Activated CD4-positive, alpha-beta T cell treated with anti-CD3 and anti-CD28 coated beads for 36 hours (primary cell): ENCODE measurements at regions of chr2 and their contacts with region 1.

Region 1: DNA sequence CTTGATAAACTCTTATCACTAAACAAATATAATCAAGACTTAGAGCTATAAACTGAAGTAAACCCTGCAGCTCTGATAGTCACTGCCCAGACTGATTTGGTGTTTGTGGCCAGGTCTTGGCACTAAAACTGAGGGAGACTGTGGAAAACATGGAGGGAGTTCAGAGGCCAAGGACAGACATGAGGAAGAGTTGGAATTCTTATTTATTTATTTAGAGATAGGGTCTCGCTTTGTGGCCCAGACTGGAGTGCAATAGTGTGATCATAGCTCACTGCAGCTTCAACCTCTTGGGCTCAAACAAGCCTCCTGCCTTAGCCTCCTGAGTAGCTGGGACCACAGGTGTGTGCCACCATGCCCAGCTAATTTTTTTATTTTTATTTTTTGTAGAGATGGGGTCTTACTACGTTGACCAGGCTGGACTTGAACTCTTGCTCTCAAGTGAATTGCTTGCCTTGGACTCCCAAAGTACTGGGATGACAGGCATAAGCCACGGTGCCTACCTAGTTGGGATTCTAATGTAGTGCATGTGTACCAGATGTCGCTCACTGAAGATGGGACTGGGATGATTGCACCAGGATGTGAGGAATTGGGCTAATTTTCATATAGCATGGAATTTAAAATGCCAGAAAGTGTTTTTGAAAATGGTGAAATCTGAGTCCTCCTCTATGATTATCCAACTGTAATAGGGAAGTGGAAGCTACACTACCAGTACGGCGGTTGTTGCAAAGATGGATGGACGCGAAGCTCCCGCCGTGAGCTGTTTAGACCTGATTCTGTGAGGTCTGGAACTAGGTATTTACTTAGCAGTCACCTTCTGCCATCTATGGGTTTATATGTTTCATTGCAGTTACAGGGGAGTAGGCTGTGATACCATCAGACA is 52.7 kb upstream of the CTLA4 start:
- DNase-seq: peak; percentile 76
- ATAC-seq: peak; percentile 70
- H3K4me3 Mint-ChIP-seq: peak overlapping the region; percentile 54
- H3K27ac Mint-ChIP-seq: peak overlapping the region; percentile 80
- H3K4me1 Mint-ChIP-seq: peaks cover 63% of the 10 kb centered on the region
- H3K27me3 Mint-ChIP-seq: no peaks in the 10 kb centered on the region

Region 2: DNA sequence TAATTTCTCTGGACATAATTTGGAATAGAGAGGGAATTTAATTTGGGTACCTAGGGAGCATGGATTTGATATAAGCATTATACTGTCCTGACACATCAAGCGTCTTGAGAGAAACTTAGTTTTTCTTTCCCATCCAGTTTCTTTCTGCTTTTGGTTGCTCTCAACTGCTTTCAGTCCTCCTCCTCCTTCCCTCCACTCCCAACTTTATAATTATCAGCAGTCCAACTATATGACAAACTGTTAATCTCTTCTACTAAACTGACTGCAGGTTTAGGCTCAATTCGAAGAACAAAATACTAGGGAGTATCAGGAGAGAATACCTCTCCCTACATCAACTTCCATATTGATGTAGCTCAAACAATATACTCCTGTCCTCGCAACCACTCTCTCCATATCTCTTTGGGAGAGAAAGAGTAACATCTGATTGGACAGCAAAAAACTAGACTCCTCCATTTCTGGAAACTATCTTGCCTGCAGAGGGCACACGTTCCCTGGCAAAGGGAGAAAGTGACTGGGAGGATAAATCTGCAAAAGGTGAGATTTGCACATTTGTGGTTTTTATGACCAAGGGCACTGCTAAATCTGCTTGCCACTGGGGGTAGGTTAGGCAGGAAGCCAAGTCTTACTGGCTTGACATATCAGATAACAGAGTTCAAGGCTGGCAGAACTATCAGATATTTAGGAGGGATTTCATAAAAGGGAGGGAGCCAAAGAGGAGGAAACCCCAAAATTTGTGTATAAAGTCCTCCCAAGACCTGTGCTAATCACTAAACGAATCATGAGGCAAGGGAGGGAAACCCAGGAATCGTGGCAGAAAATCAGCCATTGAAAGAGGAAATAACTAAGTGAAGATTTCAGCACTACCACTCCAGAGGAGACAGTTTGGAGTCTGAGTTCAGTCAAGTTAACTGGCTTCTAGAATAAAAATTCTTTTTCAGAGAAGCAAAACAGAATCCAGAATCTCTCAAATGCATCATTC is 983.4 kb before region 1 on chr2:
- CTCF ChIA-PET with region 1: no interaction called
- POLR2A ChIA-PET with region 1: no interaction called
- intact Hi-C with region 1: loop called in 1 of 2 experiments (anchors 2 kb)
- DNase-seq: peak; percentile 73
- ATAC-seq: peak; percentile 97
- H3K4me3 Mint-ChIP-seq: no peak overlapping the region
- H3K27ac Mint-ChIP-seq: no peak overlapping the region
- H3K4me1 Mint-ChIP-seq: peaks cover 10% of the 10 kb centered on the region
- H3K27me3 Mint-ChIP-seq: no peaks in the 10 kb centered on the region

Region 3: GRCh38 chr2:203453858-203454451 is 360.9 kb before region 1 on chr2:
- CTCF ChIA-PET with region 1: interaction called, 5 read pairs
- POLR2A ChIA-PET with region 1: no interaction called
- intact Hi-C with region 1: loop called in 1 of 2 experiments (anchors 1 kb)
- DNase-seq: peak; percentile 44
- ATAC-seq: no peak
- H3K4me3 Mint-ChIP-seq: no peak overlapping the region
- H3K27ac Mint-ChIP-seq: no peak overlapping the region
- H3K4me1 Mint-ChIP-seq: no peaks in the 10 kb centered on the region
- H3K27me3 Mint-ChIP-seq: no peaks in the 10 kb centered on the region

Region 4: DNA sequence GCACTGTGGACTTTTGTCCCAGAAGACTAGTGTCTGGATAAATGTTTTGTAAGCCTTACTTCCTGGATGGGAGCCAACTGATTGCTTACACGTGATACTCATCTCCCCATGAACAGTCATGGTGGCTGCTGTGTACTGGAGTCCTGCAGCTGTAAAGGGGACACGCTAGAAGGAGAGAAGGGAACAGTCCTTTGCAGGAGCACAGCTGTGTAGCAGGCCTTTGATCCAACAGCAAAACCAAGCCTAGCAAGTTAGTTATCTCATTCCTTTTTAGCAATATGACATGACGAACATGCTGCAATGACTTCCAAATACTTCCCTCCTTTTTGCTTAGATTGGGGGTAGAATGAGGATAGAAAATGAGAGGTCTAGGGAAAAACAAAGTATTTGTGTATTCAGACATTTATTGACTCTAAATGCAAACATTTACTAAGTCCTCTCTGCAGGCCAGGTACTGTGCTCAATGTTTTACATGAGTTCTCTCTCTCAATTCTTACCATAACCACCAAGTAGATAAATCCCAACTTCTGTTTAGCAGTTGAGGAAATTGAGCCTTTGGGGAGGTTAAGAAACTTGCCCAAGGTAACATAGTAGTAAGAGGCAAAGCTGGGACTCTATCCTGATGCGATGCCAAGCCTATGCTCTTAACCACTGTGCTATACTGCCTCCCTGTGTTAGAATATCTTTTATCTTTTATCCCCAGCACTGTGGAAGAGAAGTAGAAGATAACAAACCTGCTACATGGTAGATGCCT is 163.9 kb before region 1 on chr2:
- CTCF ChIA-PET with region 1: interaction called, 4 read pairs
- POLR2A ChIA-PET with region 1: no interaction called
- intact Hi-C with region 1: loop called in 1 of 2 experiments (anchors 2 kb)
- DNase-seq: peak; percentile 20
- ATAC-seq: peak; percentile 90
- H3K4me3 Mint-ChIP-seq: no peak overlapping the region
- H3K27ac Mint-ChIP-seq: no peak overlapping the region
- H3K4me1 Mint-ChIP-seq: peaks cover 20% of the 10 kb centered on the region
- H3K27me3 Mint-ChIP-seq: no peaks in the 10 kb centered on the region

Region 5: DNA sequence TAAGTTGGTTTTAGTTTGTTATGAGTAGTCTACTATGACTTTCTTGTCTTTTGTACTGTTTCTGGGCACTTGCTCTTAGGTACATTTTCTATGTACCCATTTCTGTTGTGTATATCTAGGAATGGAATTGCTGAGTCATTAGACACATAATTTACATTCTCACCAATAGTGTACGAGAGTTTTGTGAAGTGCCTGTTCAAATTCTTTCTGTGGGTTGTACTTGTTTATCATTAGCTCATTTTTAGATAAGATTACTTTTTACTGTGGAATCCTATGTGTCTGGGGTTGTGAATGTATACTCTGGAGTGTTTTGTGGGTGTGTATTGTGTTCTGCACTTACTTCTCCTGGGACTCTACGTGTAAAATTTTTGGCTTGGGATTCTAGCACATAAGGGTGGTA is 145.1 kb before region 1 on chr2:
- CTCF ChIA-PET with region 1: no interaction called
- POLR2A ChIA-PET with region 1: no interaction called
- intact Hi-C with region 1: no loop called
- DNase-seq: no peak
- ATAC-seq: peak; percentile 7
- H3K4me3 Mint-ChIP-seq: no peak overlapping the region
- H3K27ac Mint-ChIP-seq: peak overlapping the region; percentile 47
- H3K4me1 Mint-ChIP-seq: peaks cover 20% of the 10 kb centered on the region
- H3K27me3 Mint-ChIP-seq: no peaks in the 10 kb centered on the region

Region 6: GRCh38 chr2:203740780-203741281 is 74.1 kb before region 1 on chr2:
- CTCF ChIA-PET with region 1: interaction called, 24 read pairs
- POLR2A ChIA-PET with region 1: interaction called, 32 read pairs
- intact Hi-C with region 1: loop called (anchors 1 to 2 kb)
- DNase-seq: peak; percentile 52
- ATAC-seq: peak; percentile 70
- H3K4me3 Mint-ChIP-seq: peak overlapping the region; percentile 62
- H3K27ac Mint-ChIP-seq: peak overlapping the region; percentile 99
- H3K4me1 Mint-ChIP-seq: peaks cover 92% of the 10 kb centered on the region
- H3K27me3 Mint-ChIP-seq: no peaks in the 10 kb centered on the region

Region 7: GRCh38 chr2:203804070-203804469 is 10.8 kb before region 1 on chr2:
- CTCF ChIA-PET with region 1: interaction called, 36 read pairs
- POLR2A ChIA-PET with region 1: interaction called, 14 read pairs
- intact Hi-C with region 1: no loop called
- DNase-seq: peak; percentile 63
- ATAC-seq: peak; percentile 30
- H3K4me3 Mint-ChIP-seq: peak overlapping the region; percentile 17
- H3K27ac Mint-ChIP-seq: peak overlapping the region; percentile 82
- H3K4me1 Mint-ChIP-seq: peaks cover 86% of the 10 kb centered on the region
- H3K27me3 Mint-ChIP-seq: no peaks in the 10 kb centered on the region

Region 8: DNA sequence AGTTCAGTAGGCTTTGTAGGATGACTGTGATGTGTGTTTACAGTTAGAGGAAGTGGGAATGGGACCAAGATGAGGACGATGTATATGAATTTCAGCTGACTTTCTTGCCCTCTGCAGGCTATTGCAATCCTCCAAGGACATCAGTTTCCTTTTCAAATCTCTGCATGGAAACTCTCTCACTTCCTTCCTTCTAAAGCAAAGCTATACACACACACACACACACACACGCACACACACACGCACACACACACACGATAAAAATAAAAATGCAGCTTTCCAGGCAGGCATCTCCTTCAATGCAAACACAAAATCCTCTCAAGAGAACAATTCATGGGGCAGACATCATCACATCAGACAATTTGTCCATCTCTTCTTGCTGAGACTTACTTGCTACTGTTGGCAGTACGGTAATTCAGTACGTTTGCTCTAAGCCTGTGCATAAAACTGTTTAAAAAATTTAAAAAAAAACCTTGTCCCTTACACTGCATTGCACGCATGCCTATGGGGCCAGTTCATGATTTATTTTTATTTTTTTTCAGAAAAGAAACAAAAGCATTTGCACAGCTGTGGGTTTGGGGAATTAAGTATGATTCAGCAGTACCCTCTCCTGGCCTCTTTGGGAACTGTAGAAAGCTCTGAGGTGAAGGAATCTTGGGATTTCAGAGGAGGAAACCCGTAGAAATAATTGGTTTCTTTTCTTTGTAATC is 94.5 kb after region 1 on chr2:
- CTCF ChIA-PET with region 1: interaction called, 42 read pairs
- POLR2A ChIA-PET with region 1: no interaction called
- intact Hi-C with region 1: loop called (anchors 1 kb)
- DNase-seq: peak; percentile 44
- ATAC-seq: peak; percentile 72
- H3K4me3 Mint-ChIP-seq: peak overlapping the region; percentile 0
- H3K27ac Mint-ChIP-seq: peak overlapping the region; percentile 44
- H3K4me1 Mint-ChIP-seq: peaks cover 30% of the 10 kb centered on the region
- H3K27me3 Mint-ChIP-seq: peaks cover 2% of the 10 kb centered on the region